Astrocyte of the cerebellum (primary cell): ENCODE measurements at regions of chr7 and their contacts with region 1.

Region 1: GRCh38 chr7:157707983-157708918 is 371.4 kb downstream of the DNAJB6 start:
- DNase-seq: no peak
- H3K4me3 ChIP-seq: no peak overlapping the region
- CTCF ChIP-seq: no peak

Region 2: GRCh38 chr7:157503229-157503628 is 205.0 kb before region 1 on chr7:
- in situ Hi-C with region 1: no loop called
- DNase-seq: no peak
- H3K4me3 ChIP-seq: no peak overlapping the region
- CTCF ChIP-seq: no peak

Region 3: DNA sequence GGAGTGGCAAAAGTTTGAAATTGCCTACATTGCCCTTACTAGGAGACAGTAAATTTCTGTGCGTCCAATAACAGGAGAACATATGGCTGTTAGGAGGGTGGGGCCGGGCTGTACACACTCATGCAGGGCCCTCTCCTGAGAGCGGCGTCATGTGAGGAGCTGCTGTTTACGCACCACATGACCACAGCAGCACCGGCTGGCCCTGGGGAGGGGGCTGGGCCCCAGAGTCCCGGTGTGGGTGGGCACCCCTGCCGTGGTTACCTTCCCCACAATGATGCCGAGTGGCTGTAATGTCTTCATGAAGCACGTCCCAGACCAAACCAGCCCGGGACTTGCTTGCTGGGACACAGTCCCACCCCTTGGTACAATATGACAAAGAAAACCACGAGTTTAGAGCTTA is 62.7 kb before region 1 on chr7:
- in situ Hi-C with region 1: no loop called
- DNase-seq: no peak
- H3K4me3 ChIP-seq: no peak overlapping the region
- CTCF ChIP-seq: no peak

Region 4: DNA sequence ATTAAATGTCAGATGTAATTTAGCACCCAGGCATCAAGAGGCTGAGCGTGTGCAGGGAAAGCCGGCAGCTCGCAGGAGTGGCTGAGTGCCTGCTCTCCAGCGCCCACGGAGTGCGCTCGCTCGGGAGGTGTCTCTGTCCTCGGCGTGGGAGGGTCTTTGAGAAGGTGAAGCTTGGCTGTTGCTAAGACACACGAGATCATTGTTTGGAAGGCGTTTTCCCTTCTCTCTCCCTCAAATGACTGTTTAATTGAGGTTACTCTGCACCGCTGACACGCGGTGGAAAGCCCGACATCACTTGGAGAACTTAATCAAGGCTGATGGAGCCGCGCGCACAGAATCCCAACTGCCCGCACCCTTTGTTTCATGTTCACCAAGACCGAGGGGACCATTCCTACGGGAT is 43.2 kb after region 1 on chr7:
- in situ Hi-C with region 1: loop called (anchors 5 kb)
- DNase-seq: no peak
- H3K4me3 ChIP-seq: no peak overlapping the region
- CTCF ChIP-seq: no peak